Transverse colon (tissue), 4 donors: ENCODE measurements at regions of chr20 and their contacts with region 1.

Region 1: DNA sequence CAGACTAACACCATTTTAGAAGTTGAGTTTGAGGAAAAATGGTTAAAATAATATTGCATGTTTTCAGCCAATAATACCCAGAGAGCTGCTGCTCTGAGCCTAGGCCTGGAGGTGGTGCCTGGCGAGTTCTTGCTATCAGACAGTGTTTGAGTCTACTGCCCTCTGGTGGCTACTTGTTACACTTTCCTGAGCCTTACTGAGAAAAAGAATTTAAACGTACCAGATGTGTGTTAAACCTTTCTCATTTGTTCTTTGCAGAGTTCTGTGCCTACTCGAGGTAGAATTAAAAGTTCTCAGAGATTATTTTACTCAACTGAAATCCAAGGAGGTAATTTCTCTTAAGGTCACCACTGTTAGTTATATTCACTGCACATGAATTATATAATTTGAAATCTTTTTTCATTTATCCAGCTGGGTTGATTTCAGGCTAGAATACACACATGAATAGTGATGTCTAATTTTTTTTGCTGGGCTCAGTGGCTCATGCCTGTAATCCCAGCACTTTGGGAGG is 38.2 kb downstream of the SHLD1 start:
- DNase-seq: peak; percentile 80
- H3K4me3 ChIP-seq: no peak overlapping the region
- H3K27ac ChIP-seq: no peak overlapping the region
- H3K4me1 ChIP-seq: peaks cover 0 to 24% (median 5%) of the 10 kb centered on the region in 4 donors
- H3K27me3 ChIP-seq: no peaks in the 10 kb centered on the region
- CTCF ChIP-seq: peak; percentile 85 to 92 (median 90)
- EP300 ChIP-seq: no peak
- POLR2A ChIP-seq: no peak

Region 2: DNA sequence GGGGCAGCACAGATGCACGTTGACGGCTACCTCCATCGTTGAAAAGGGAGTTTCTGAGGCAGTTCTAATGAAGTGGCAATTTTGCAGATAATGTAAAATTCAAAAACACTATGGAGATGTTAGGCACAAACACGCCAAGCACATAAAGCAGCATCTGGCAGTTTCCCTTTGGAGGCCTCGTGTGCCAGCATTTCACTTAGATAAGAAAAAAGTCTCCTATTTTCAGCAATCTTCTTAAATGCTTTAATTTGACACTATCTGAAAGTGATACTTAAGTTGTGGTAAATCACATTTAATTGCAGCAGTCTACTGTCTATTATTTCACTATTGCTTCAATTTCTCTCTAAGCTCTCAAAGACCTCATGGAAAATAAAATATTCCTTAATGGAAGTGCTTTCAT is 346.3 kb before region 1 on chr20:
- in situ Hi-C with region 1: no loop called
- intact Hi-C with region 1: no loop called
- DNase-seq: no peak
- H3K4me3 ChIP-seq: no peak overlapping the region
- H3K27ac ChIP-seq: no peak overlapping the region
- H3K4me1 ChIP-seq: no peaks in the 10 kb centered on the region
- H3K27me3 ChIP-seq: peaks cover 11% of the 10 kb centered on the region
- CTCF ChIP-seq: no peak
- EP300 ChIP-seq: no peak
- POLR2A ChIP-seq: no peak

Region 3: GRCh38 chr20:5557123-5557522 is 231.3 kb before region 1 on chr20:
- in situ Hi-C with region 1: loop called in 3 of 4 experiments (anchors 5 to 25 kb)
- intact Hi-C with region 1: no loop called
- DNase-seq: peak; percentile 62
- H3K4me3 ChIP-seq: no peak overlapping the region
- H3K27ac ChIP-seq: no peak overlapping the region
- H3K4me1 ChIP-seq: peaks cover 0 to 15% (median under 1%) of the 10 kb centered on the region in 4 donors
- H3K27me3 ChIP-seq: no peaks in the 10 kb centered on the region
- CTCF ChIP-seq: peak; percentile 43 to 55 (median 45)
- EP300 ChIP-seq: no peak
- POLR2A ChIP-seq: no peak

Region 4: GRCh38 chr20:5569021-5569420 is 219.4 kb before region 1 on chr20:
- in situ Hi-C with region 1: loop called in 3 of 4 experiments (anchors 5 to 25 kb)
- intact Hi-C with region 1: loop called (anchors 5 kb)
- DNase-seq: peak; percentile 42
- H3K4me3 ChIP-seq: no peak overlapping the region
- H3K27ac ChIP-seq: no peak overlapping the region
- H3K4me1 ChIP-seq: peaks cover 0 to 29% (median 0%) of the 10 kb centered on the region in 4 donors
- H3K27me3 ChIP-seq: no peaks in the 10 kb centered on the region
- CTCF ChIP-seq: peak; percentile 40 to 60 (median 53)
- EP300 ChIP-seq: no peak
- POLR2A ChIP-seq: no peak

Region 5: GRCh38 chr20:5871459-5872410 is 83.3 kb after region 1 on chr20:
- in situ Hi-C with region 1: no loop called
- intact Hi-C with region 1: no loop called
- DNase-seq: no peak
- H3K4me3 ChIP-seq: no peak overlapping the region
- H3K27ac ChIP-seq: no peak overlapping the region
- H3K4me1 ChIP-seq: no peaks in the 10 kb centered on the region
- H3K27me3 ChIP-seq: no peaks in the 10 kb centered on the region
- CTCF ChIP-seq: no peak
- EP300 ChIP-seq: no peak
- POLR2A ChIP-seq: no peak

Region 6: DNA sequence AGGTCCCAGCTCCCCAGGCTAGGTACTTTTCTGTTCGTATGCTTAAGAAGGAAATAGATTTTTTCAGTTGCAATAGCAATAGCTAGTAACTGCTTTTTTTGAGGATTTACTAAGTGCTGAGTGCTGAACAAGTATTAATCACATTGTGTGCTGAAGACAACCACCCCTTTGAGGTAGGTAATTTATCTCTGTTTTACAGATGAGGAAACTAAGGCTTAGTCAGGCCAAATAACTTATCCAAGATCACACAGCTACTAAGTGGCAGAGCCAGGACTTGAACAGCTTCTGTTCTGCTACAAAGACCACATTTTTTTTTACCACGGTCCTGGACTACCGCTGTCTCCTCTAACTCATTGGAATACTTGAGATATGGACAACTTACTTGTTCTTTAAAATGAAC is 225.6 kb after region 1 on chr20:
- in situ Hi-C with region 1: no loop called
- intact Hi-C with region 1: no loop called
- DNase-seq: no peak
- H3K4me3 ChIP-seq: no peak overlapping the region
- H3K27ac ChIP-seq: no peak overlapping the region
- H3K4me1 ChIP-seq: peaks cover 0 to 9% (median 0%) of the 10 kb centered on the region in 4 donors
- H3K27me3 ChIP-seq: no peaks in the 10 kb centered on the region
- CTCF ChIP-seq: no peak
- EP300 ChIP-seq: no peak
- POLR2A ChIP-seq: no peak

Region 7: GRCh38 chr20:7180256-7181045 is 1392.0 kb after region 1 on chr20:
- in situ Hi-C with region 1: no loop called
- intact Hi-C with region 1: no loop called
- DNase-seq: no peak
- H3K4me3 ChIP-seq: no peak overlapping the region
- H3K27ac ChIP-seq: no peak overlapping the region
- H3K4me1 ChIP-seq: no peaks in the 10 kb centered on the region
- H3K27me3 ChIP-seq: no peaks in the 10 kb centered on the region
- CTCF ChIP-seq: no peak
- EP300 ChIP-seq: no peak
- POLR2A ChIP-seq: no peak